ENCODE measurements at regions of chr9 and their contacts with region 1.

Region 1: GRCh38 chr9:23123048-23123632 is 676.5 kb downstream of the DMRTA1 start:
- DNase-seq: peak; percentile 4
- H3K4me3 ChIP-seq: no peak overlapping the region
- H3K27ac ChIP-seq: no peak overlapping the region
- H3K4me1 ChIP-seq: no peaks in the 10 kb centered on the region
- H3K27me3 ChIP-seq: no peaks in the 10 kb centered on the region
- CTCF ChIP-seq: peak; percentile 66 to 71

Region 2: DNA sequence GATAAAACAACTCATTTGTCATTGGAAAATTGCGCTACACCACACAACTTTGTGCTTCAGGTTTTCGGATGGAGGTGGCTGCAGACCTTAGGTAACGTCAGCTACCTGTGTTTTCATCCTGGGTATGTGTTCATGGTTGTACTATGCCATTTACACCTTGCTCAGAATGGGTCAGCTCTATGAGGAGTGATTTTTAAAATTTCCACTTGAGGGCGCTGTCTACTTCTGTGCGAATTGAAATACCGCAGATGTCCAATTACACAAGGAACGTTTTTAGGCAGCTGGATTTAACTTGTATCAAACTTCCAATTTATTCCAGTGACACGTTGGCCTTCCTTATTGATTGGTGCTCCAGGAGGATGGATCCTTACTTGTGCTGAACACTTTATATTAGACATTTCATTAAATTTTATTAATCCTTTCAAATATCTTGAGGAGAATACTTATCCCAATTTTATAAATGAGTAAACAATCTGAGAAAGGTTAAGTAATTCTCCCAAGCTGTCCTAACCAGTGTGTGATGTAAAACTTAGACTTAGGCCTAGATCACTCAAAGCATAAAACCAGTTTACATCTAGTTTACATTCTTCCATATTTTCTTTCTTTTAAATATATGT is 653.1 kb before region 1 on chr9:
- CTCF ChIA-PET with region 1: no interaction called
- dilution Hi-C with region 1: no loop called
- in situ Hi-C with region 1: no loop called
- intact Hi-C with region 1: loop called (anchors 1 kb)
- DNase-seq: peak; percentile 42
- H3K4me3 ChIP-seq: no peak overlapping the region
- H3K27ac ChIP-seq: no peak overlapping the region
- H3K4me1 ChIP-seq: no peaks in the 10 kb centered on the region
- H3K27me3 ChIP-seq: no peaks in the 10 kb centered on the region
- CTCF ChIP-seq: peak; percentile 76 to 82

Region 3: DNA sequence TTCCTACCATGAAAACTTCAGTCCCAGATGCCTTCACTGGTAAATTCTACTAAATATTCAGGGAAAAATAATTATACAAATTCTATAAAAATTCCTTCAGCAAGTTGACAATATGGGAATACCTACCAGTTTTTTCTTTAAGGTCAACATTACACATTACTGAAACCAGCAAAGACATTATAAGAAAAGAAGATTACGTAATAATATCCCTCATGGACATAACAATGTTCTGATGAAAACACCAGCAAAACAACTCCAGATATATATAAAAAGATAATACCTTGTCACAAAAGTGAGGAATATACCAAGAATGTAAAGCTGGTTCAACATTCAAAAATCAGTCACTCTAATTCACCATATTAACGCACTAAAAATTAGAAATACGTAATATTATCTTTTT is 168.6 kb before region 1 on chr9:
- CTCF ChIA-PET with region 1: no interaction called
- dilution Hi-C with region 1: no loop called
- in situ Hi-C with region 1: no loop called
- intact Hi-C with region 1: no loop called
- DNase-seq: no peak
- H3K4me3 ChIP-seq: no peak overlapping the region
- H3K27ac ChIP-seq: no peak overlapping the region
- H3K4me1 ChIP-seq: no peaks in the 10 kb centered on the region
- H3K27me3 ChIP-seq: no peaks in the 10 kb centered on the region
- CTCF ChIP-seq: no peak

Region 4: DNA sequence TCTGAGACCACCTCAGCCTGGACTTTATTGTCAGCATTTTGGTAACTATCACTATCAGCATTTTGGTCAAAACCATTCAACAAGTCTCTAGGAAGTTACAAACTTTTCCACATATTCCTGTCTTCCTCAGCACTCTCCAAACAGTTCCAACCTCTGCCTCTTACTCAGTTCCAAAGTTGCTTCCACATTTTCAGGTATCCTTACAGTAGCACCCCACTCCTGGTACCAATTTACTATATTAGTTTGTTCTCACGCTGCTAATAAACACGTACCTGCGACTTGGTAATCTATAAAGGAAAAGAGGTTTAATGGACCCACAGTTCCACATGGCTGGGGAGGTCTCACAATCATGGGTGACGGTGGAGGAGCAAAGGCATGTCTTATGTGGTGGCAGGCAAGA is 125.2 kb before region 1 on chr9:
- CTCF ChIA-PET with region 1: no interaction called
- dilution Hi-C with region 1: no loop called
- in situ Hi-C with region 1: no loop called
- intact Hi-C with region 1: no loop called
- DNase-seq: no peak
- H3K4me3 ChIP-seq: no peak overlapping the region
- H3K27ac ChIP-seq: no peak overlapping the region
- H3K4me1 ChIP-seq: no peaks in the 10 kb centered on the region
- H3K27me3 ChIP-seq: peaks cover 1% of the 10 kb centered on the region
- CTCF ChIP-seq: no peak

Region 5: GRCh38 chr9:23451802-23452418 is 328.8 kb after region 1 on chr9:
- CTCF ChIA-PET with region 1: no interaction called
- dilution Hi-C with region 1: no loop called
- in situ Hi-C with region 1: no loop called
- intact Hi-C with region 1: no loop called
- DNase-seq: no peak
- H3K4me3 ChIP-seq: no peak overlapping the region
- H3K27ac ChIP-seq: no peak overlapping the region
- H3K4me1 ChIP-seq: no peaks in the 10 kb centered on the region
- H3K27me3 ChIP-seq: no peaks in the 10 kb centered on the region
- CTCF ChIP-seq: no peak

Region 6: DNA sequence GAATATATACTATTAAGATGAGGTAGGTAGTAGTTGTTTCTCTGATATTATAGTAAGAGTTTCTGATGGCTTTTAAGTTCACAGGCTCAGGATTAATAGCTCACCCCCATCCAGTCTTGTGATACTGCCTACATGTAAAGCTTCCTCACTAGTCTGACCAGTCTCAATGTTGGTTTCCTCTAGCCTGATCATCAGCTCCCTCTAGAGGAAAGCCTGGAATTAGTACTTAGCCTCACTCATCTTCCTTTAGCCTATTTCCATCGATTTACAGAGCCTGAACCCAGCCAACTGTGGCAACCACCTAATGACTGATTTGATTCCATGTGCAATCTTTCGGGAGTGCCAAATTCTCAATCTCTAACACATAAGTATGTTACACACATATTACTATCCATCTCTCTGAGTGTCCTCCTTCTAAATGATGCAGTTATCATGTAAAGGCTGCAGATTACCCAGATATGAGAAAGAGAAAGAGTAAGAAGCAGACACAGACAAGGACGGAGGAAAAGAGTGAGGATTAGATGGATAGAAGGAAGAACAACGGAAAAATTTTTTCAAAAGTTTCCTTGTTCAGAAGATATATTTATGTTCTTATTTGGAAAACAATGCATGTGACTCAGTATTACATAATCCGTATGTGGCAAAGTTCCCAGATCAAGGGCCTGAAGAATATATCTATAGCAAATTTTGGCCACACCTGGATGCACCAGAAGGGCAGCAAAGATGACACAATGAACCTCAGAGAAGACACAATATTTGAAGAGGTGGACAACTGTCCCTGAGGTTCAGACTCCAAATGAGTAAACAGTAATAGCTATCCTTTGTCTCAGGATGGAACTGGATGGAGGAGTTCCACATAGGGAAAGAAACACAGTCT is 369.2 kb after region 1 on chr9:
- CTCF ChIA-PET with region 1: no interaction called
- dilution Hi-C with region 1: no loop called
- in situ Hi-C with region 1: no loop called
- intact Hi-C with region 1: loop called (anchors 1 kb)
- DNase-seq: peak; percentile 57
- H3K4me3 ChIP-seq: no peak overlapping the region
- H3K27ac ChIP-seq: no peak overlapping the region
- H3K4me1 ChIP-seq: peaks cover 9% of the 10 kb centered on the region
- H3K27me3 ChIP-seq: peaks cover 2% of the 10 kb centered on the region
- CTCF ChIP-seq: peak; percentile 68 to 78

Region 7: DNA sequence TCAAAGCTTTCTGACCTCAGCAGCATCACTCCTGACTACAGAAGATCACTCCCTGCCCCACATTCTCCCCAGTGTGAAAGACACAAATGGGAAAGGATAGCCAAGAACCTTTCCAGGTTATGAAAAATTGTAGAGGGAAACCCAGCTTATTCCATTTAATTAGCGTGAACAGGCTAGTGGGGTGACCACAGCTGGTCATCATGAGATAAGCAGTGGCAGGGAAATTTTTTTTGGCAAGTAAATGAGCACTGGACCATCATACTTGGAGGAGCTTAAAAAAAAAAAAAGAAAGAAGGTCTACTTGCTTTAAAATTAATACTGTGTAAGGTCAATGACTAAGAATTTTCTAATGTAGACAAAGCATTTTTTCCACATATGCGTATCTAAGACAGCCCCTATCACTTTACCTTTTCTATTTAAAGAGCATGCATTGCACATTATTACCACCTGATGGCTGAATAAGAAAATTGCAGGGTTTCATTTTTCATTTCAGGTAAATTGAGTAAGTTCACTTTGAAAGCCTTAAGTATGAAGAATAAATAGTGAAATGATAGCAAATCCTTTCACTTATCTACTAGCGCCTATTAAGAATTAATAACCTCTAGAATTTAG is 579.3 kb after region 1 on chr9:
- CTCF ChIA-PET with region 1: no interaction called
- dilution Hi-C with region 1: no loop called
- in situ Hi-C with region 1: loop called in 1 of 2 experiments (anchors 10 kb)
- intact Hi-C with region 1: no loop called
- DNase-seq: no peak
- H3K4me3 ChIP-seq: no peak overlapping the region
- H3K27ac ChIP-seq: no peak overlapping the region
- H3K4me1 ChIP-seq: no peaks in the 10 kb centered on the region
- H3K27me3 ChIP-seq: no peaks in the 10 kb centered on the region
- CTCF ChIP-seq: peak; percentile 23 to 42

Region 8: GRCh38 chr9:23887781-23888180 is 764.6 kb after region 1 on chr9:
- CTCF ChIA-PET with region 1: no interaction called
- dilution Hi-C with region 1: no loop called
- in situ Hi-C with region 1: no loop called
- intact Hi-C with region 1: loop called (anchors 10 kb)
- DNase-seq: no peak
- H3K4me3 ChIP-seq: no peak overlapping the region
- H3K27ac ChIP-seq: no peak overlapping the region
- H3K4me1 ChIP-seq: no peaks in the 10 kb centered on the region
- H3K27me3 ChIP-seq: no peaks in the 10 kb centered on the region
- CTCF ChIP-seq: no peak

Region 9: GRCh38 chr9:24245988-24246387 is 1122.8 kb after region 1 on chr9:
- CTCF ChIA-PET with region 1: no interaction called
- dilution Hi-C with region 1: no loop called
- in situ Hi-C with region 1: no loop called
- intact Hi-C with region 1: loop called (anchors 2 kb)
- DNase-seq: peak; percentile 17
- H3K4me3 ChIP-seq: no peak overlapping the region
- H3K27ac ChIP-seq: no peak overlapping the region
- H3K4me1 ChIP-seq: no peaks in the 10 kb centered on the region
- H3K27me3 ChIP-seq: no peaks in the 10 kb centered on the region
- CTCF ChIP-seq: peak; percentile 49 to 61

Measured in mammary epithelial cell (primary cell).